Endothelial cell of umbilical vein (primary cell): ENCODE measurements at regions of chr1 and their contacts with region 1.

Region 1: DNA sequence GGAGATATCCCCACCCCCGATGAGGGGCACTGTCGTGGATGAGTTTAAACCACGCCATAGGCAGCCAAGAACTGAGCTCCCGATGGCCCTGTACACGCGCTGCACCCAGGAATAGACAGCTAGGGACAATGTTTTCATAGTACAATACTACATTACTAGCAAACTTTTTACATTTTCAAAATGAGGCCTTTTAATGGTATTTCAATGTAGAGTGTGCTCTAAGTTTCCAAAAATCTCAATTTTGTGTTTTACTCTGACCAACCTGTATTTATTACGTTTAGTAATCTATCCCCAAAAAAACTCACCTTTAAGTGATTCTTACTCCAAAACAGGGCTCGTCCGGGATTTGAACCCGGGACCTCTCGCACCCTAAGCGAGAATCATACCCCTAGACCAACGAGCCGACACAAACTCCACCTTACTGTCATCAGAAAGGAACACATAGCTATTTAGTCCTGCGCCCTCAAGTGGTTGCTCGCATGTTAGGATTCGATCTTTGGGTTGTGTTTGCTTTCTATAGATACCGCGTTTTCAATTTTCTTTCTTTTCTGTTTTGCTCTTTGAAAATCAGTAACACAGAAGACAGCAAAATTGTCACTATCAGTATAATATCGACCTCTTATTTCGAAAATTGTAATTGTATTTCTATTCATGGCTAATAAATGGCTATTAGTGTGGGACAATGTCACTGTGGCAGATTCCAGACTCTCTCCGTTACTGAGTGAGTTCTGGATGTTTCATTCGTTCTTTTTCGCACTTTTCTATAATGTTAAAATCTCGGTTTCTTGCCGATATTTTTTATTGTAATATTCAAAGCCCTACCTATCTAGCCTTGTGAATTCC is 6.4 kb upstream of the MPZL1 start:
- DNase-seq: peak; percentile 93
- H3K4me3 ChIP-seq: peak overlapping the region; percentile 89 to 99 (median 96)
- H3K27ac ChIP-seq: peak overlapping the region; percentile 61
- H3K4me1 ChIP-seq: peaks cover 10% of the 10 kb centered on the region
- H3K27me3 ChIP-seq: peaks cover 3 to 4% of the 10 kb centered on the region in 2 experiments
- CTCF ChIP-seq: peak; percentile 80 to 86
- POLR2A ChIP-seq: no peak

Region 2: DNA sequence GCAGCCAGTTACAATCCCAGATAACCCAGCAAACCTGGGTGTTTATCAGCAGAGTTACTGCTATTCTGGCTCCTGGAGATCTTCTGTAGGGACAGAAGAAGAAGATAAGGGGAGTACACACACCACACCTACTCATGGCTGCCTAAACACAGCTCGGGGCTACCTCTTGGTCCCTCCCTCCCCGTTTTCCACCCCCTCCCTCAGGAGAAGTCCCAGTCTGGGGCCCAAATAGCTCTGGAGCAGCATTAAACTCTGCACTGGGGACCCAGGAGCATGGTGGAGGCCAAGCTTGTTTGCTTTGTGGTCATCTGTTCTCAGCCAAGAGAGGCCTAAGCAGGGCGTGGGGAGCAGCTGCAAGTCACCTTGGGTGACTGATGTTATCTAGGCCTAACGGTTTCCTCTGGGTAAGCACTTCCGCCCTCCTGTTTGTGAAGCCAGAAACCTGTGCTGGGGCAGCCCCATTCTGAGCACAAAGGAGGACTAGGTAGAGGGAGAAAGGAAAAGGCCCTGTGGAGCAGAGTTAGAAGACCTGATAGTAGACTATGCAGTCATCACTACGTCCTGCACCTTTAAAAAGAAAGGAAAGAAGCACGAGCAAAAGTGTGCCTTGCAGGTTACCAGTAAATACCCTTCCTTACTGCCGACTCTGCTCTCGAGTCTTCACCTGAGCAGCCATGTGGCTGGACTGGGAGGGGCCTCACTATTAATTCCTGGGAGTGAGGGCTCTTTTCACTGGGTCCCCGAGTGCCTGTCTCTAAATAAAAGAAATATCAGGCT is 87.3 kb before region 1 on chr1:
- CTCF ChIA-PET with region 1: no interaction called
- POLR2A ChIA-PET with region 1: no interaction called
- dilution Hi-C with region 1: no loop called
- intact Hi-C with region 1: no loop called
- DNase-seq: no peak
- H3K4me3 ChIP-seq: no peak overlapping the region
- H3K27ac ChIP-seq: no peak overlapping the region
- H3K4me1 ChIP-seq: no peaks in the 10 kb centered on the region
- H3K27me3 ChIP-seq: peaks cover 28 to 32% of the 10 kb centered on the region in 2 experiments
- CTCF ChIP-seq: no peak
- POLR2A ChIP-seq: no peak

Region 3: DNA sequence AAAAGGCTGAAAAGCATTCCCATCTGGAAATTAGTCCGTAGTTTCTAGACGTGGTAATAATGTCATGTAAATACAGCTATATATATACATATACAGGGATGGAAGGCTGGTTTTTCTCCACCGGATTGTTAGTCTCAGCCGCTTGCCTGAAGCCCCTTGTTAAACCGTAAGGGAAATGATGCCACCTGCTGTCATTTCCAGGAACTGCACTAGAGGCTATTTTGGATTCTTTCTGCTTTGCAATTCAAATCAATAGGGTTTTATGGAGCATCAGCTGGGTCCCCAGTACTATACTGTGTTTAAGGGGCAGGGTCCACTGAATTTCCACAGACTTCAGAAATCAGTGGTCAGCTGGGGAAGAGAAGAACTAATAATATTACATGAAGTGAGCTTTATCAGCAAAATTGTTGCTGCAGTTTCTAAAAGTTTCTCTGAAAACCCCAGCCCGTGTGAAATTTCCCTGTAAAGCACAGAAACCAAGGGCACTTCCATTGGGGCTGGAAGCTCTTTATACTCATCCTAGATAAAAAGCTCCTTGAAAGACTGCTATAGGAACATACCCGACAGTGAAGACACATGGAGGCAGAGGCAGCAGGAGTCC is 27.4 kb before region 1 on chr1:
- CTCF ChIA-PET with region 1: interaction called, 4 read pairs
- POLR2A ChIA-PET with region 1: no interaction called
- dilution Hi-C with region 1: no loop called
- intact Hi-C with region 1: loop called (anchors 1 kb)
- DNase-seq: peak; percentile 86
- H3K4me3 ChIP-seq: no peak overlapping the region
- H3K27ac ChIP-seq: no peak overlapping the region
- H3K4me1 ChIP-seq: peaks cover 4% of the 10 kb centered on the region
- H3K27me3 ChIP-seq: peaks cover 5 to 6% of the 10 kb centered on the region in 2 experiments
- CTCF ChIP-seq: peak; percentile 77 to 84
- POLR2A ChIP-seq: no peak

Region 4: GRCh38 chr1:167803358-167804207 is 88.2 kb after region 1 on chr1:
- CTCF ChIA-PET with region 1: interaction called, 6 read pairs
- POLR2A ChIA-PET with region 1: no interaction called
- dilution Hi-C with region 1: no loop called
- intact Hi-C with region 1: loop called (anchors 1 kb)
- DNase-seq: peak; percentile 92
- H3K4me3 ChIP-seq: no peak overlapping the region
- H3K27ac ChIP-seq: no peak overlapping the region
- H3K4me1 ChIP-seq: peaks cover 5% of the 10 kb centered on the region
- H3K27me3 ChIP-seq: no peaks in the 10 kb centered on the region
- CTCF ChIP-seq: peak; percentile 96 to 99
- POLR2A ChIP-seq: no peak

Region 5: GRCh38 chr1:167964646-167965045 is 249.3 kb after region 1 on chr1:
- CTCF ChIA-PET with region 1: no interaction called
- POLR2A ChIA-PET with region 1: no interaction called
- dilution Hi-C with region 1: no loop called
- intact Hi-C with region 1: loop called (anchors 2 kb)
- DNase-seq: peak; percentile 71
- H3K4me3 ChIP-seq: no peak overlapping the region
- H3K27ac ChIP-seq: no peak overlapping the region
- H3K4me1 ChIP-seq: peaks cover 17% of the 10 kb centered on the region
- H3K27me3 ChIP-seq: no peaks in the 10 kb centered on the region
- CTCF ChIP-seq: no peak
- POLR2A ChIP-seq: no peak

Region 6: GRCh38 chr1:168225476-168226190 is 510.3 kb after region 1 on chr1 and contains the start of gene SFT2D2:
- CTCF ChIA-PET with region 1: no interaction called
- POLR2A ChIA-PET with region 1: no interaction called
- dilution Hi-C with region 1: no loop called
- intact Hi-C with region 1: loop called (anchors 5 kb)
- DNase-seq: peak; percentile 78
- H3K4me3 ChIP-seq: peak within 1 kb of the TSS; percentile 63 to 88 (median 65)
- H3K27ac ChIP-seq: peak within 1 kb of the TSS; percentile 83
- H3K4me1 ChIP-seq: peaks cover 23% of the 10 kb centered on the region
- H3K27me3 ChIP-seq: peaks cover 6 to 7% of the 10 kb centered on the region in 2 experiments
- CTCF ChIP-seq: no peak
- POLR2A ChIP-seq: peak; percentile 47
- total RNA-seq, gene SFT2D2: 63.8 and 68.1 TPM in 2 replicates